PC-9 (cell line): ENCODE measurements at regions of chr20 and their contacts with region 1.

Region 1: DNA sequence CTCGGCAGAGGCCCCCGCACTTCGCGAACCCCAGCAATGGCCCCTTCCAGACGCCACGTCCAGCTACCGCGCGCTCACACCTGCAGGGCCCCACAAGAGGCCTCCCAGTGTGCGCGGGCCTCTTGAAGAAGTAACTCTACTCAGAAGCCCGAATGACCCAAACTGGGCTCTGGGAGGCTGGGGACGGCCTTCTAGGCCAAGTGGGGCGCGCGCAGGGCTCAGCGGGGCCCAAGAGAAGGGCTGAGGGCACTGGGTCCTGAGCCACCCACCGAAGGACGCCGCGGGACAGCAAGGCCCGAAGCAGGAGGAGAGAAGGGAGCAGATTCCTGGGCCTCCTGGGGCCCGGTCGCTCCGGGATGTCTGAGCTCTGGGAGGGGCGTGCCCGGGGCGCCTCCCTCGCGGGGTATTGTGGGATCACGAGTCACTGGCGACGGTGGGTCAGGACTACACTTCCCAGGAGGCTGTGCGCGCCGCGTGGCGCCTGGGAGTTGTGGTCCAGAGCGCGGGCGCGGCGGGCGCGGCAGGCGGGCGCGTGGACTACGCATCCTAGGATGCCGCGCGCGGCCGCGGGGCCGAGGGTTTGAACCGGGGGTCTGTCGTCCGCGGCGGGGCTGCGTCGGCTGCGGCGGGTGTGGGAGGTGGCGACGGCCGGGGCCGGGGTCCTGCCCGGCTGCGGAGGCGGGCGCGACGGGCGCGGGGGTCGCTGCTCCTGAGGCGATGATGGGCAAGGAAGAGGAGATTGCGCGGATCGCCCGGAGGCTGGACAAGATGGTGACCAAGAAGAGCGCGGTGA is at the start of gene TCEA2:
- DNase-seq: peak; percentile 87 to 97
- H3K4me3 ChIP-seq: peak within 1 kb of the TSS; percentile 90
- H3K27ac ChIP-seq: peak within 1 kb of the TSS; percentile 61
- H3K4me1 ChIP-seq: peaks cover 54% of the 10 kb centered on the region
- H3K27me3 ChIP-seq: no peaks in the 10 kb centered on the region
- CTCF ChIP-seq: no peak
- total RNA-seq, gene TCEA2: 100 and 156 TPM in 2 replicates

Region 2: DNA sequence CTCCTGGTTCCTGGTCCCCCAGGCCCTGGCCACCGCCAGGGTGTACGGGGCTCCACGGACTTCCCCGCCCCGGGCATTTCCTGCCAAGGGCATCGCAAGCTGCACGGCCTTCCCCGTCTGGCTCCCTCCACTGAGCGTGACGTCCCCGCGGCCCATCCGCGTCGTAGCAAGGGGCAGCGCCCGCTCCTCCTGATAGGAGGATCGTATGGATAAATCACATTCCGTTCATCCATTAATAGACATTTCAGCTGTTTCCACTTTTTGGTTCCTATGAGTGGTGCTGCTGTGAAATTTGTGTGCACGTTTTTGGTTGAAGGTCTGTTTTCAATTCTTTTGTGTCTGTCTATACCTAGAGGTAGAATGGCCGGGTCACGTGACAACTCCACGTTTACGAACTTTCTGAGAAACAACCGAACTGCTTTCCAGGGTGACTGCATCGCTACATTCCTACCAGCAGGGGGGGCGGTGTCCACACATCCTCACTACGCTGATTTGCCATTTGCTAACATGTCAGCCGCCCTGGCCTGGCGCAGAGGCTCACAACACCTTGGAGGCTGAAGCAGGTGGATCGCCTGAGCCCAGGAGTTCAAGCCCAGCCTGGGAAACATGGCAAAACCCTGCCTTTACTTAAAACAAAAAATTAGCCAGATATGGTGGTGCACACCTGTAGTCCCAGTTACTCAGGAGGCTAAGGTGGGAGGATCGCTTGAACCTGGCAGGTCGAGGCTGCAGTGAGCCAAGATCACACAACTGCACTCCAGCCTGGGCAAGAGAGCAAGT is 628.0 kb before region 1 on chr20:
- CTCF ChIA-PET with region 1: no interaction called
- POLR2A ChIA-PET with region 1: no interaction called
- intact Hi-C with region 1: loop called (anchors 5 kb)
- DNase-seq: peak; percentile 52 to 77
- H3K4me3 ChIP-seq: no peak overlapping the region
- H3K27ac ChIP-seq: no peak overlapping the region
- H3K4me1 ChIP-seq: no peaks in the 10 kb centered on the region
- H3K27me3 ChIP-seq: peaks cover 44% of the 10 kb centered on the region
- CTCF ChIP-seq: peak; percentile 98

Region 3: DNA sequence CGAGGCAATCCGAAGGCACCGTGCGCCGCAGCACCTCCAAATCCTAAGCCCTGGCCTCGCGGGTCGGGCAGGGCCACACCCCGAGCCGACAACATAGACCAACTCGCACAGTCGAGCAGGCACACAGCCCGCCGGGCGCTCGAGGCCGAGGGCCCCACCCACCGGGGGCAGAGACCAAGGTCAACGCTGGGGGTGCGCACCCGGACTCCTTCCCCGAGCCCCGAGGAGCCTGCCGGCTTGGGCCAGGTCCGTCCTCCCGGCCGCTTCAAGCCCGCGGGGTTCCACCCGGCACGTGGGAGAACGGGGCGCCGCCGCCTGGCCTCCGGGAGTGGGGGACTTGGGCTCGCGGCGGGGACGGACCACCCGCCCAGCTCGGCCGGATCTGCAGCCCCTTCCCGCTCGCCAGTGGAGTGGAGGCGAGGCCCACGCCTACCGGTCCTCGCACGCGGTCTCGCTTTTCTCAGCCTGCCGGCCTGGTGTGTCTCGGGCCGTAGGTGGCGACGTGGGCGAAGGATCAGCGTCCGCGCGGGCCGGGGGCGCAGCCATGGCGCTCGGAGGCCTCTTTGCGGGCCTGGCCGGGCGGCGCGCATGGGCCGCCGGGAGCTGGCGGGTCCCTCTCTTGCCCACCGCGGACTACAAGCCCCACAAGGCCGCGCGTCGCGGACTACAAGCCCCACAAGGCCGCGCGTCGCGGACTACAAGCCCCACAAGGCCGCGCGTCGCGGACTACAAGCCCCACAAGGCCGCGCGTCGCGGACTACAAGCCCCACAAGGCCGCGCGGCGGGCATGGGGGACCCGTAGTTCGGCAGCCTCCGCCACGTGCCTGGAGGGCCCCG is 106.7 kb before region 1 on chr20 and contains the start of gene UCKL1:
- CTCF ChIA-PET with region 1: no interaction called
- POLR2A ChIA-PET with region 1: interaction called, 8 read pairs
- intact Hi-C with region 1: loop called (anchors 2 kb)
- DNase-seq: peak; percentile 74 to 94
- H3K4me3 ChIP-seq: peak within 1 kb of the TSS; percentile 74
- H3K27ac ChIP-seq: peak within 1 kb of the TSS; percentile 65
- H3K4me1 ChIP-seq: peaks cover 26% of the 10 kb centered on the region; the same call in 1 of the 2 replicates
- H3K27me3 ChIP-seq: no peaks in the 10 kb centered on the region
- CTCF ChIP-seq: 0 out of 2 replicates have a peak, but pooled peaks have one; percentile 13
- total RNA-seq, gene UCKL1: 51.7 and 55.1 TPM in 2 replicates

Region 4: GRCh38 chr20:64038565-64039292 is 24.1 kb before region 1 on chr20:
- CTCF ChIA-PET with region 1: interaction called, 5 read pairs
- POLR2A ChIA-PET with region 1: interaction called, 5 read pairs
- intact Hi-C with region 1: loop called (anchors 2 kb)
- DNase-seq: peak; percentile 69 to 87
- H3K4me3 ChIP-seq: peak overlapping the region; percentile 96
- H3K27ac ChIP-seq: no peak overlapping the region
- H3K4me1 ChIP-seq: peaks cover 13% of the 10 kb centered on the region; the same call in 1 of the 2 replicates
- H3K27me3 ChIP-seq: peaks cover 20% of the 10 kb centered on the region; the same call in 1 of the 2 replicates
- CTCF ChIP-seq: peak; percentile 86

Region 5: DNA sequence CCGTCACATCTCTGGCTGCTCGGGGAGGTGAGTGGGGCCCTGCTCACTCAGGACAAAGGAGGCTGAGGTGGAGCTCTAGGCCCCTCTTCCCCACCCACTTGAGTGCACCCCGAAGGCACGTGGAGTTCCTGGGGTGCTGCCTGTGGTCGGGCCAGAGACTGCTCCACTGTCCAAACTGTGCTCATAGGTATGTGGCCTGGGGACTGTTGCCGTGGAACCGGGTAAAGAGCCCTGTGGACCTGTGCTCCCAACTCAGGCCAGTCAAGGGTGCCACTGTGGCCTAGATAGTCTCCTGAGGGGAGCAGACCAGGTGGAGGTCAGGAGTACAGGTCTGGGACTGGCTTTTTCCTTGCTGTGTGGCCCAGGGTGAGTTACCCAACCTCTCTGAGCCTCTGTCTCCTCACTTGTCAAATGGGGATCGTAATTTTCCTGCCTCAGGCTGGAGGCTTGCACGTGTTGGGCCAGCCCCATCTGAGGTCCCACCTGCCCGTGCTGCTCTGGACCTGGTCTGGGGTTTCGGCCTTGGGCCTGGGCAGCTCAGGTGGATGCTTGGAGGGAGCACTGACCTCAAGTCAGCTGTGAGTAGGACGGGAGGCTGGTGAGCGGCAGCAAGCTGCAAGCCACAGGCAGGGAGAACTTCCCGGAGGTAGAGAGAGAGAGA is 57.0 kb after region 1 on chr20:
- CTCF ChIA-PET with region 1: no interaction called
- POLR2A ChIA-PET with region 1: interaction called, 14 read pairs
- intact Hi-C with region 1: no loop called
- DNase-seq: peak in 1 of 2 experiments; percentile 28
- H3K4me3 ChIP-seq: no peak overlapping the region
- H3K27ac ChIP-seq: no peak overlapping the region
- H3K4me1 ChIP-seq: no peaks in the 10 kb centered on the region
- H3K27me3 ChIP-seq: peaks cover 55% of the 10 kb centered on the region
- CTCF ChIP-seq: no peak